AG04449 (cell line): ENCODE measurements at regions of chr22 and their contacts with region 1.

Region 1: DNA sequence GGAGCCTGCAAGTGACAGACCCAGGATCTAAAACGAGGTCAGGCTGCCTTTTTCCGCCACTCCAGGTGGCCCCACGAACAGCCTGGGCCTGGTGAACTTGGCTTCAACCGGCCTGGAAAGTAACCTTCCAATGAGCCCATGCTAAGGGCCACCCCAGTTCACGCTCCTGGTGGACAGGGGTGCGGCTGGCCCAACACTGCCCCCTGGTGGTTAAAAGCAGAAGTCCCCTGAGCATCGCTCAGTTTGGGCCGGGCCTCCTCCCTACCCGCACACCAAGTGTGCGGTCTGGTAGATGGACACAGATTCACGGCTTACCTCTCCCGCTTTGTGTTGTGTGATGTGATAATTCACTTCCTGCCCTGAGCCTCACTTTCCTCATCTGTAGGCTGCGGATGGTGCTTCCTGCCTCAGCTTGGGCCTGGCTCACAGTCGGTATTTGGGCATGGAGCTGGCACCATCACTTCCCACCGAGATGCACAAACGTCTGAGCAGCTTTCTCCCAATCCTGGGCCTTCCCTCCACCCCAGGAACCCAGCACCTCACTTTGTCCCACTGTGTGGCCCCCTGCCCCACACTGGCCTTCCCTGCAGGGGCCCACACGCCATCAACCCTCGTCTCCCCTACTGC is 13.7 kb upstream of the SEC14L3 start:
- DNase-seq: no peak
- H3K4me3 ChIP-seq: no peak overlapping the region
- CTCF ChIP-seq: peak; percentile 97

Region 2: GRCh38 chr22:30435674-30436126 is 49.8 kb before region 1 on chr22:
- CTCF ChIA-PET with region 1: interaction called, 15 read pairs
- POLR2A ChIA-PET with region 1: no interaction called
- DNase-seq: no peak
- H3K4me3 ChIP-seq: no peak overlapping the region
- CTCF ChIP-seq: no peak

Region 3: GRCh38 chr22:30444632-30445437 is 40.6 kb before region 1 on chr22:
- CTCF ChIA-PET with region 1: interaction called, 88 read pairs
- POLR2A ChIA-PET with region 1: no interaction called
- DNase-seq: no peak
- H3K4me3 ChIP-seq: no peak overlapping the region
- CTCF ChIP-seq: peak; percentile 75

Region 4: GRCh38 chr22:30474683-30475424 is 10.6 kb before region 1 on chr22:
- CTCF ChIA-PET with region 1: interaction called, 27 read pairs
- POLR2A ChIA-PET with region 1: no interaction called
- DNase-seq: no peak
- H3K4me3 ChIP-seq: no peak overlapping the region
- CTCF ChIP-seq: no peak

Region 5: GRCh38 chr22:30500628-30501027 is 15.2 kb after region 1 on chr22:
- CTCF ChIA-PET with region 1: interaction called, 37 read pairs
- POLR2A ChIA-PET with region 1: no interaction called
- DNase-seq: no peak
- H3K4me3 ChIP-seq: no peak overlapping the region
- CTCF ChIP-seq: no peak

Region 6: DNA sequence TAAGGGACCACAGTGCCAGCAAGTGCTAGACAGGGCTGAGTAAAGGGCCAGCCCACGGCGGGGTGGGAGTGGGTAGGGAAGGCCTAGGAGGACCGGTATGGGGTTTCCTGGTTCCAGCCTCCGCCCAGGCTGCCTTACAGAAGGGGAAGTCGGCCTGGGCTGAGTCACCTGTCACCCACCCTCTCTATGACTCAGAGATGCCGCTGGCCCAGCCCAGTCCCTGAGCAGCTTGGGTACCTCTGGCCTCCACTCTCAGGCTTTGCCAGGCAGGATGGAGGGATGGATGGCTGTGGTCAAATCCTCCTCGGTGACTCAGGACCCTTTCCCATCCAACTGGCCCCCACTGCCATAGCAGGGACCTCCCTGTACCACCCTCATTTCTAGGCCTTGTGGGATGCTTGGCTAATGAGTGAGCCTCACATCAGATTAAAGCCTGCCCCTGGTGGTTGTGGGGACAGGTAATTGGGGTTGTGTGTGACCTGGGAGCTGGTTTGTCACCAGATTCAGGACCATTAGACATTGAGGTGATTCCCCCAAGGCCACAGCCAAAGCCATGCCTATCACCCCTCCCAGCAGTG is 164.0 kb after region 1 on chr22:
- CTCF ChIA-PET with region 1: no interaction called
- POLR2A ChIA-PET with region 1: no interaction called
- DNase-seq: no peak
- H3K4me3 ChIP-seq: no peak overlapping the region
- CTCF ChIP-seq: no peak